ENCODE measurements at regions of chr2 and their contacts with region 1.

Region 1: DNA sequence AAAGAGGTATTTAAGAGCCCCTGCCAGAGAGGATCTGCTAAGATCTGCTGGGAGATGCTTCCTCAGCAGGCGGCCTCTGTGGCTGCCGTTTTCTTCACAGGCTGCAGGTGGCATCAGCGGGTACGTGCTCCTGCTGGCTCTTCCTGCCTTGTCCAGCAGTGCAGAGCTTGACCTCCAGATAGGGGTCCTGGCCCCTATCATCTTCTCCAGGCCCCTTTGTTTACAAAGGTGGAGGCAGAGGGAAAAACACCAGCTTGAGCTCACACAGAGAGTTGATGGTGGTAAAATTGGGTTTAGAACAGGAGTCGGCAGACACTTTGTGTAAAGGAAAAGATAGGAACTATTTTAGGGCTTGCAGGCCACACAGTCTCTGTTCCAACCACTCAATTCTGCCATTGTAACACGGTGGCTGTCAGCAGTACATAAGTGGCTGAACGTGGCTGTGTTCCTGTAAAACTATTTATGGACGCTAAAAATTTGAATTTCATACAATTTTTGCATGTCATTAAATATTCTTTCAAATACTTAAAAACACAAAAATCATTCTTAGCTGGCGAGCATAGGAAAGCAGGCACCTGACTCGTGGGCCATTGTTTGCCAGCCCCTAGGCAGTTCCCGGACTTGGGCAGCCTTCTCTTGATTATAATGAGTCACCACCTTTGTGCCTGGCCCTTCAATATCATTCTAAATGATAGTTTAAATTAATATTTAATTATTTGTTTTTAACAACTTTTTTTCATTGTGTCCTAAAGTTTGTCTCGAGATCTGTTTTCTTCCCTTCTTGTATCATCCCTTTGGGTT is 98.2 kb upstream of the B3GNT7 start:
- DNase-seq: peak; percentile 73
- ATAC-seq: peak; percentile 96
- H3K4me3 Mint-ChIP-seq: no peak overlapping the region
- H3K27ac Mint-ChIP-seq: peak overlapping the region; percentile 94
- H3K4me1 Mint-ChIP-seq: peaks cover 28% of the 10 kb centered on the region
- H3K27me3 Mint-ChIP-seq: no peaks in the 10 kb centered on the region
- CTCF ChIP-seq: 0 out of 2 replicates have a peak, but pooled peaks have one; percentile 35

Region 2: DNA sequence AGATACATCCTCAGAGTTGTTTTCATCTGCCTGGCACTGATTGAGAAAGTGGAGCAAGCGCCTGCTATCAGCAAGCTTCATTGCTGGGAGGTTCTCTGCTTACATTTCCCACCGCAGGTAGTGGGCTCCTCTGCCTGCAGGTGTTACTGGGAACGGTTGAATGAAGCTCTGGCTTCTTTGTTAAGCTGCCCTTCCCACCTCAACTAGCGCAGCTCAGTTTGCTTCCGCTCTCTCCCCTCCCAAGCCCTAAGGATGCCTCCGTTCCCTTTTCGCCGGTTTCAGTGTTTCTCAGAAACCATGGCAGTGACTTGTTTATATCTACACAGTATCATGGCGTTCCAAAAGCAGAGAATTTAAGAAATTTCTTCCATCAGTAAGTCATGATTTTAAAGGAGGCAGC is 26.0 kb after region 1 on chr2:
- CTCF ChIA-PET with region 1: interaction called, 20 read pairs
- POLR2A ChIA-PET with region 1: interaction called, 3 read pairs
- DNase-seq: peak; percentile 32
- ATAC-seq: peak; percentile 79
- H3K4me3 Mint-ChIP-seq: no peak overlapping the region
- H3K27ac Mint-ChIP-seq: peak overlapping the region; percentile 55
- H3K4me1 Mint-ChIP-seq: peaks cover 24% of the 10 kb centered on the region
- H3K27me3 Mint-ChIP-seq: no peaks in the 10 kb centered on the region
- CTCF ChIP-seq: no peak

Region 3: DNA sequence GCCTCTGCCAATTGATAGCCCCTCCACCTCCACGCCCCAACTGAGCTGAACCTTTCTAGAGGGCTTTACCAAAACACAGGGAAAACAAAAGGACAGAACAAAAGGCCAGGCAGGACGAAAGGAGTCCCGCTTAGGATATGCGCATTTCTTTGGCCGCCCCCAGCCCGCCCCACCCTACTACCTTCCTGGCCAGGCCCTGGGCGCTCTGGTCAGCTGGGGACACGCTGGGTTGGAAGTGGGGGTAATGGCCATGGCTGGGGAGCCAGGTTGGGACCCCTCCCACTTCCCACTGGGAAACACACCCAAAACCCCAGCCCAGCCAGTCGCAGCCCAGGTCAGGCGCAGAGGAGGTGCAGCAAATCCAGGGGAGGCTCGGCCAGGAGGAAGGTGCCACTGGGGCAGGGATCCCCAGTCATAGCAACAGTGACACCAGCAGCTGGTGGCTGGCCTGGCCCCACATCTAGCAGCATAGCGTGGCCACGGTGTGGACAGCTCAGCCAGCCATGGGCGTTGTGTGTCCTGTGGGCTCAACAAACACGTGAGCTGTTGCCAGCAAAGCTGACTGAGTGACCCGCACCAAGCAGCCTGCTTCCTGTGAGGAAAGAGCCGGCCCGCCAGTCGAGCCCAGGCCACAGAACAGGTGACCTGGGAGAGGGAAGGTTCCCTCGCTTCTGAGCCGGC is 73.6 kb after region 1 on chr2:
- CTCF ChIA-PET with region 1: interaction called, 16 read pairs
- POLR2A ChIA-PET with region 1: no interaction called
- DNase-seq: peak; percentile 66
- ATAC-seq: peak; percentile 71
- H3K4me3 Mint-ChIP-seq: peak overlapping the region; percentile 36; the same call in 1 of the 2 replicates
- H3K27ac Mint-ChIP-seq: peak overlapping the region; percentile 98
- H3K4me1 Mint-ChIP-seq: peaks cover 73% of the 10 kb centered on the region
- H3K27me3 Mint-ChIP-seq: no peaks in the 10 kb centered on the region
- CTCF ChIP-seq: no peak

Region 4: GRCh38 chr2:231411831-231412617 is 114.7 kb after region 1 on chr2:
- CTCF ChIA-PET with region 1: interaction called, 31 read pairs
- POLR2A ChIA-PET with region 1: no interaction called
- DNase-seq: peak; percentile 95
- ATAC-seq: peak; percentile 85
- H3K4me3 Mint-ChIP-seq: peak overlapping the region; percentile 69
- H3K27ac Mint-ChIP-seq: peak overlapping the region; percentile 99
- H3K4me1 Mint-ChIP-seq: peaks cover 60% of the 10 kb centered on the region
- H3K27me3 Mint-ChIP-seq: no peaks in the 10 kb centered on the region
- CTCF ChIP-seq: peak; percentile 76

Region 5: DNA sequence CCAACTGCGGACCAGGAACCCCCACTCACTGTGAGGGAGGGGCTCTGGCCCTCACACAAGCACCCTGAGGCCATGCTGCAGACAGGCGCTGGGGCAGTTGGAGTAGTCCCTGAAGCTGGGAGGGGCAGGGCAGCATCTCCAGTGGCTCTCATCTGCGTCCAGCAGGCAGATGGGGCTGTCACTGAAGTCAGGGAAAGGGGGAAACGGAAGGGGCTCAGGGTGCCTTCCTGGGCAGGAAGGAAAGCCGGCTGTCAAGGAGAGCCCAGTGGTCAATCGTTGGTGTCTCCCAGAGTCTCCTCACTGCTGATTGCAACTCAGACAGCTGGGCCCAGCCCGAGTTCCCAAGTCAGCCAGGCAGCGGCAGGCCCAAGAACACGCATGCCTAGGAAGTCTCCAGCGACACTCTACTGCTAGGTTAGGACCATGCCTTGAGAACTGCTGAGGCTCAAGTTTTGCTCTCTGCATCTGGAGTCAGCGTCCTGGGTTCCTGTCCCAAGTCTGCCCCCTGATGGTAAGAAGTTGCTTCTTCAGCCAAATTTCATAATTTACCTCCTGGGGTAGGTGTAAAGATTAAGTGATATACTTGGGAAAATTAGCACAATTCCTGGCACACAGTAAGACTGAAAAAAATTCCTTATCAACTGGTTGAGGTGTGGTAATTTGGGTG is 260.4 kb after region 1 on chr2:
- CTCF ChIA-PET with region 1: no interaction called
- POLR2A ChIA-PET with region 1: no interaction called
- DNase-seq: peak; percentile 52
- ATAC-seq: peak; percentile 97
- H3K4me3 Mint-ChIP-seq: no peak overlapping the region
- H3K27ac Mint-ChIP-seq: no peak overlapping the region
- H3K4me1 Mint-ChIP-seq: peaks cover 7% of the 10 kb centered on the region
- H3K27me3 Mint-ChIP-seq: peaks cover 3% of the 10 kb centered on the region; the same call in 1 of the 2 replicates
- CTCF ChIP-seq: peak; percentile 44; the same call in 1 of the 2 replicates

Measured in WTC11 (cell line).